GM23248 (cell line): ENCODE measurements at regions of chr4 and their contacts with region 1.

Region 1: DNA sequence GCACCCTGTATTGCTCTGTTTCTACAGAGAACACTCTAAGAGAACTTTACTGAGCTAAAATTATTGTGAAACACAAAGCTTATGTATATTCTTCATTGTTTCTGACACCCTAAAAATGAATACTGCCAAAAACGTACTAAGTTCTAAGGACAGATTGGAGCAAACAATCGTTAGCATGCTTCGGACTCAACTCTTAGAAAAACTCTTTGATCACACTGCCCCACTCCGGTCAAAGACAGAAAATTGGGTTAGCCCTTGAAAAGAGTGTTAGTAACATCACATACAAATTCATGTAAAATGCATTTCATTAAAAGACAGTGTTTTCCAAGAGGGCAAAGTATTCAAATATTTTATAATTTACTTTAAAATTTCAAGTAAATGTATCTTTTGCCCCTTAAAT is 177.4 kb downstream of the DCHS2 start:
- DNase-seq: peak; percentile 74
- H3K4me3 ChIP-seq: no peak overlapping the region
- H3K27ac ChIP-seq: no peak overlapping the region
- H3K4me1 ChIP-seq: 0 out of 2 replicates have a peak, but pooled peaks cover 3% of the 10 kb centered on the region
- H3K27me3 ChIP-seq: no peaks in the 10 kb centered on the region

Region 2: GRCh38 chr4:153791746-153792617 is 522.3 kb before region 1 on chr4:
- in situ Hi-C with region 1: loop called (anchors 10 kb)
- DNase-seq: peak; percentile 81
- H3K4me3 ChIP-seq: peak overlapping the region; percentile 58
- H3K27ac ChIP-seq: no peak overlapping the region
- H3K4me1 ChIP-seq: 0 out of 2 replicates have a peak, but pooled peaks cover 4% of the 10 kb centered on the region
- H3K27me3 ChIP-seq: peaks cover 53% of the 10 kb centered on the region